Right ventricle myocardium superior (tissue), 1 donor: ENCODE measurements at regions of chr7 and their contacts with region 1.

Region 1: DNA sequence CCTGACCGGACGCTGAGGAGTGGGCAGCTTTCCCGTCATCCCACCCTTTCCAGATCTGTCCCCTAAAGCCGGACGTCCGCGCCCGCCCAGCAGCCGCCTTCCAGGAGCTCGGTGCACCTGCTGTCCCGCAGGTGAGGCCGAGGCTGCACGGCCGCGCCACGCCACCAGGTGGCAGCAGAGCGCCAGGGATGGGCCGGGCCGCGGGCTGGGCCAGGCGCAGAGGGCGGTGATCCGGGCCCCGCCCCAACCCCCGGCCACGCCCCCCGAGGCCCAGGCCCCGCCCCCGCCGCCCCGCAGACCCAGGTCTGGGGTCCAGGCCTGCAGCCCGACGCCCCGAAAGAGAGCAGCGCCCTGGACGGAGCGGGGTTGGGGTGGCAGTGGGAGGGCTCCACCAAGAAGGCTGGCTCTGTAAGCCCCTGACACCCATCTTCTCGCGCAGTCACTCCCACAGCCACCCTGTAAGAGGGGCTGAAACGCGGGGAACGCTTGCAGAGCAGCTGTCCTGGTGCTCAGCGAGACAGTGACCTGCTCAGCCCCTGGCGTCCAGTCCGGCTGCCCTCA is 32.2 kb downstream of the FOXL3 start:
- DNase-seq: peak; percentile 81
- ATAC-seq: peak; percentile 92

Region 2: GRCh38 chr7:207418-208129 is 114.6 kb before region 1 on chr7:
- intact Hi-C with region 1: no loop called
- DNase-seq: no peak
- ATAC-seq: no peak

Region 3: GRCh38 chr7:636396-636795 is 314.2 kb after region 1 on chr7:
- intact Hi-C with region 1: loop called (anchors 10 kb)
- DNase-seq: no peak
- ATAC-seq: no peak

Region 4: DNA sequence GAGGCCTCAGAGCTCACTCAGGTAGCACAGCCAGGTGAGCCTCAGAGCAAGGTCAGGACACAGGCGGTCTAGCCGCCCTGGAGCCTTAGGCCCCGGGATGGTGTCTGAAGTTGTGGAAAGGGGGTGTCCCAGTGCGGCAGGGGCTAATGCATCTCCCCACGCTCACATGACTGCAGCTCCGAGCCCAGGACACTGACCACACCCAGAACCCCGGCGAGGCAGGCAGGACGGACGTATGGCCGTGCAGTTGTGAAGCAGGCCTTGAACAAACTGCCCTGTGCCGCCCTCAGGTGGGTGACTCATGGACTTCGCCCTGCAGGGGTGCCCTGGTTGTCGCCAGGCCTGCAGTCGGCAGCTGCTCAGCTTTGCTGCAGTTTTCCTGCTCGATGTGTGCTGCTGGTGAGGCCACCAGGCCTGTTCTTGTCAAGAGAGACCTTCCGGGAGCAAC is 409.9 kb after region 1 on chr7:
- intact Hi-C with region 1: loop called (anchors 5 kb)
- DNase-seq: peak; percentile 70
- ATAC-seq: peak; percentile 87

Region 5: GRCh38 chr7:774161-775109 is 452.2 kb after region 1 on chr7:
- intact Hi-C with region 1: loop called (anchors 5 kb)
- DNase-seq: peak; percentile 73
- ATAC-seq: peak; percentile 65